GM10248 (cell line): ENCODE measurements at regions of chr12 and their contacts with region 1.

Region 1: GRCh38 chr12:56636675-56637540 is 6.8 kb upstream of the BAZ2A start:
- DNase-seq: peak; percentile 90
- CTCF ChIP-seq: peak; percentile 90

Region 2: GRCh38 chr12:56341616-56342015 is 295.3 kb before region 1 on chr12:
- CTCF ChIA-PET with region 1: interaction called, 3 read pairs
- POLR2A ChIA-PET with region 1: interaction called, 11 read pairs
- DNase-seq: no peak
- CTCF ChIP-seq: no peak

Region 3: DNA sequence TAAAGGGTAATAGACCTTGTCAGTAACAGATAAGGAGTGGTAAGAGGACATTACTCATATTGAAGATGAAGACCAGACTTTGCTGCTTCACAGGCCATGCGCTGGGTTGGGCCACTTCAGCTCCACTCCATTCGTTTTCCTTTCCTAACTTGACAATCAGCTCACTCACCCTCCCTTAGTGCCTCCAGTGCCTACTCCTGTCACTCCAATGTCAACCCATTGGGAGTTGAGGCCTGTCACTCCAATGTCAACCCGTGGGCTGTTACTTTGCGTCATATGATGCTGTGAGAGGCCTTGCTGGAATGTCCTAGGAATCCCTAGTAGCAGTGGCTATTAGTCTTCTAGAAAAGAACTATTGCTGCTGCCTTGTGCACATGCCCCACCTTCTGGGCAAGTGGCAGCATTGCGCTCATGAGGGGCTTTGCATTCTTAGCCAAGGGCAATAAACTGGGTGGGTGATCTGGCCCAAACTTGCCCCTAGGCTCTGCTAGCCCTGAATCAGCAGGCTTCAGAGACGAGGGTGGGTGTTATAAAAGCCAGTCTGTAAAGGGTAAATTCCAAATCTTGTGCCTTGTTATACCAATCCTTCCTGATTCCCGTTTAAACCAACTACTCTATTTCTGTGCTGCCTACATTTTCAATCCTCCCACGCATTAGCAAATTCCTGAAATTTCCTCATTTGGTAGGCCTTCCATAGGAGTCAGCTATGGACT is 42.8 kb before region 1 on chr12:
- CTCF ChIA-PET with region 1: interaction called, 13 read pairs
- POLR2A ChIA-PET with region 1: no interaction called
- DNase-seq: peak; percentile 71
- CTCF ChIP-seq: peak; percentile 90

Region 4: GRCh38 chr12:56616925-56617324 is 20.0 kb before region 1 on chr12:
- CTCF ChIA-PET with region 1: interaction called, 44 read pairs
- POLR2A ChIA-PET with region 1: interaction called, 4 read pairs
- DNase-seq: no peak
- CTCF ChIP-seq: no peak

Region 5: DNA sequence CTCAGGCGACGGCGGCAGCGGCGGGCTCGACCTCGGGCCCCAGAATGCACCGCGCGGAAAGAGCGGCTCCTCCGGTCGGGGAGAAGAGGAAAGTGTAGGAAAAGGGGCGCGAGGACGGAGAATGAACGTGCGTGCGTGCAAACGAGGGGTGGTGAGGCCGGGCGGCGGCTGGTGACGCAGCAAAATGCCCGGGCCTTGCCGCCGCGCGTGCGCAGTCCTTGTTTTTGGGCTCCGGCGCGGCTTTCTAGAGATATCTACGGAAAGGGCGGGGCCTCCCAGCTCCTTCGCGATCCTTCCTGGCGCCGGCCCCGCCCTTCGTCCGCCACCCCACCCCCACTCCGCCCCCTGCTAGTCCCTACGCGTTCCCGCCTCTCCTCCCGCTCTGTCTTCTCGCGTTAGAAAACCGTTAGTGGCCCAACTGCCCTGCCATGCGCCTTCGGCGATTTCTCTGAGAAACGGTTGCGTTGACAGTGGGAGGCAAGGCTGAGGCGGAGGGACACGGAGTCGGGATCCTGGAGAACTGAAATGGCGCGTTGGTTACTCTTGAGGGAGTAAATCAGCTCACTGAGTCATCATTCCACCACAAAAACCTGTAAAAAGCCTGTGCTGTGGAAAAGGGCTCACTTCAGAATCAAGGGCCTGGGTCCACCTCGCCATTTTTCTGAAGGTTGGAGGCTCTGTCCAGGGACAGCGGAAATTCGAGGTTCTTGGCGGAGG is 51.4 kb after region 1 on chr12 and contains the start of gene PTGES3:
- CTCF ChIA-PET with region 1: interaction called, 10 read pairs
- POLR2A ChIA-PET with region 1: interaction called, 11 read pairs
- DNase-seq: peak; percentile 98
- CTCF ChIP-seq: no peak